Activated CD8-positive, alpha-beta memory T cell treated with anti-CD3 and anti-CD28 coated beads, Interleukin-2, amount 10 ng/mL, durations not matched to agents 7 days and 5 days (primary cell): ENCODE measurements at regions of chr2 and their contacts with region 1.

Region 1: DNA sequence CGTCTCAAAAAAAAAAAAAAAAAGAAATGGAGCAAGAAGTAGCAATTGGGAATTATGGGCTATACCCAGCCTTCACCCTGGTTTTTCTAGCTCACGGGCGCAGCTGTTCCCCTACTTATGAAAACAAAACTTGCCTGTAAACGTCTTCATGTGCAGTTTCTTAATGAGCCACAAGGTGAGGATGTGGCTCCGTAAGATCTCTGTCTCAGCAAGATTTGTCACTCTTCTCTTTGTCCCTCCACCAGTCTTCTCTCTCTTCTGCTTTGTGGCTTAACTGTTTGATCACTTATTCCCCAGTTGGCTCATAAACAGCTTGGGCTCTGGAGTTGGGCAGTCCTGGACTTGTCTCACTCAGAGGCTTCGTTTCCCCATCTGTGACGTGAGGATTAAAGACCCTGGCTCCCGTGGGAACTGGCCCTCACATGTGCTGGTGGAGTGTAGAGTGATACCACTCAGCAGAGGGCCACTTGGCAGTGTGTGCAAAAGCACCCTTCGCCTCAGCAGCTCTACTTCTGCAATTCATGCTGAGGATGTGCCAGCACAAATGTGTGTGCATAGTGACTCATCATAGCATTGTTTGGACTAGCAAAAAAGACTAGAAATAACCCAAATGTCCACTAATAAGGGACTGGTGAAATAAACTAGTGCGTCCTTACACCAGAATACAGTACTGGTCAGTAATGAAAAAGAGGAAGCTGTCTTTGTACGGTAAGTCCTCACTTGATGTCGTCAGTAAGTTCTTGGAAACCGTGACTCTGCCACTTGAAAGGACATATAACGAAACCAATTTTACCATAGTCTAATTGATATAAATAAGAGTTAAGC is 8.7 kb downstream of the CEP68 start:
- DNase-seq: peak; percentile 66
- ATAC-seq: peak; percentile 90
- H3K4me3 Mint-ChIP-seq: no peak overlapping the region
- H3K27ac Mint-ChIP-seq: peak overlapping the region; percentile 43
- H3K4me1 Mint-ChIP-seq: peaks cover 28% of the 10 kb centered on the region
- H3K27me3 Mint-ChIP-seq: no peaks in the 10 kb centered on the region

Region 2: GRCh38 chr2:64873472-64873924 is 191.4 kb before region 1 on chr2:
- CTCF ChIA-PET with region 1: no interaction called
- DNase-seq: peak; percentile 85
- ATAC-seq: peak; percentile 98
- H3K4me3 Mint-ChIP-seq: peak overlapping the region; percentile 33
- H3K27ac Mint-ChIP-seq: no peak overlapping the region
- H3K4me1 Mint-ChIP-seq: peaks cover 6% of the 10 kb centered on the region
- H3K27me3 Mint-ChIP-seq: peaks cover 11% of the 10 kb centered on the region

Region 3: DNA sequence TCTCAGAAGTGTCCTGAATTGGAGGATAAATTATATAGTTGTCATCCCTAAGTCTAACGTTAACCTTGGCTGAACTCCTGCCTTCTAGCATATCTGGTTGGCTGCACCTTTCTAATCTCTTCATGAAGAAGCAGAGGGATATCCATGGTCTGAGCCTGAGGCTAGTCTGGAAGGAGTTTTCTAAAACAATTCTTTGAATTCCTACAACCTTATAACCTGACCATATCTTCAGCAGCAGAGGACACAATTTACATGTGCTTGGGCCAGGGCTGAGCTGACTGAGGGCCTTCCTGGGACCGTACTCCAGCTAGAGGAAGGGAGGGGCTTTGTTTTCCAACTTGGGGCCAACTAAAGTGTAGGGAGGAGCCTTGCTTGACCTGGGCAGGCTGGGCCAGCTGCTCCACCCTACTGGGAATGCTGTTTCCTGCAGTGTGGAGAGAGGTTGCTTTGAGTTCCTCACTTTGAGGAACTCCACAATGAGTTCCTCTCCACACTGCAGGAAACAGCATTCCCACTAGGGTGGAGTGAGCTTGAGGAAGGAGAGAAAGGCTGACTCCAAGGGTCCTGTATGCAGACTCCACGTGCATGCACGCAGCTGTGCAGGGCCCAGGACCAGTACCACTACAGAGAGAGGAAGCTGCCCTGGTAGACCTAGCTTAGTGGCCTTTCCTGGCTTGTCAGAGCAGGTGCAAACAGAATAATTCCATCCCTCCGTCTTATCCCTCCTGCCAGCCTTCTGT is 10.8 kb after region 1 on chr2:
- CTCF ChIA-PET with region 1: interaction called, 18 read pairs
- DNase-seq: no peak
- ATAC-seq: no peak
- H3K4me3 Mint-ChIP-seq: no peak overlapping the region
- H3K27ac Mint-ChIP-seq: peak overlapping the region; percentile 38
- H3K4me1 Mint-ChIP-seq: peaks cover 4% of the 10 kb centered on the region
- H3K27me3 Mint-ChIP-seq: no peaks in the 10 kb centered on the region

Region 4: DNA sequence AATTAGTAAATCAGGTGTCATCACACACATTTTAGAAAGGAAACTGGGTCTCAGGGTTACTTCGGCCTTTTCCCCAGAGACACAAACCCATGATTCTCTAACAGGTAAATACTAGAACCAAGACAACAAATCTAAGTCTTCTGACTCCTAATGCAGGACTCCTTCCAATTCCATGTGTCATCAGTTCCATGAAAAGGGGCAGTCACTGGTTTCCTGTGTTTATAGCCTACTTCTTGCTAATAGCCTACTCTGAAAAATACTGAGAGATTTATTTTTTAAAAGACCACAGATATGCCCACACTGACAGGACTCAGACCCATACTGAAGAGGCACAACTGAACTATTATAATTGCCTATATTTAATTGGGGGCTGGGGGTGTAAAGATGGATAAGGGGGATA is 32.0 kb after region 1 on chr2:
- CTCF ChIA-PET with region 1: no interaction called
- DNase-seq: no peak
- ATAC-seq: no peak
- H3K4me3 Mint-ChIP-seq: no peak overlapping the region
- H3K27ac Mint-ChIP-seq: no peak overlapping the region
- H3K4me1 Mint-ChIP-seq: peaks cover 7% of the 10 kb centered on the region
- H3K27me3 Mint-ChIP-seq: no peaks in the 10 kb centered on the region

Region 5: GRCh38 chr2:65129826-65130663 is 65.1 kb after region 1 on chr2 and contains the start of gene RAB1A:
- CTCF ChIA-PET with region 1: interaction called, 22 read pairs
- DNase-seq: peak; percentile 100
- ATAC-seq: peak; percentile 95
- H3K4me3 Mint-ChIP-seq: peak within 1 kb of the TSS; percentile 95
- H3K27ac Mint-ChIP-seq: peak within 1 kb of the TSS; percentile 99
- H3K4me1 Mint-ChIP-seq: peaks cover 40% of the 10 kb centered on the region
- H3K27me3 Mint-ChIP-seq: no peaks in the 10 kb centered on the region
- total RNA-seq, gene RAB1A: 58.4 to 78.3 TPM

Region 6: DNA sequence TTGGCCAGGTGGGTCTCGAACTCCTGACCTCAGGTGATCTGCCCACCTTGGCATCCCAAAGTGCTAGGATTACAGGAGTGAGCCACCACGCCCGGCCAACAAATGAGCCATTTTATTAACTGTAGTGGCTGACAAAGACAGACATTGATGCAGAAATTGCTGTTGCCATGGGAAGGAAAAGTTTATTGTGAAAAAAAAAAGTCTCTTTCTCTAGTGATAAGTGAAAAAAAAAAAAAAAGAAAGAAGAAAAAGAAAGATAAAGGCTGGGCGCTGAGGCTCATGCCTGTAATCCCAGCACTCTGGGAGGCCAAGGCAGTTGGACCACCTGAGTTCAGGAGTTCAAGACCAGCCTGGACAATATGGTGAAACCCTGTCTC is 104.8 kb after region 1 on chr2:
- CTCF ChIA-PET with region 1: interaction called, 43 read pairs
- DNase-seq: no peak
- ATAC-seq: no peak
- H3K4me3 Mint-ChIP-seq: no peak overlapping the region
- H3K27ac Mint-ChIP-seq: no peak overlapping the region
- H3K4me1 Mint-ChIP-seq: no peaks in the 10 kb centered on the region
- H3K27me3 Mint-ChIP-seq: no peaks in the 10 kb centered on the region

Region 7: GRCh38 chr2:65186872-65187851 is 122.2 kb after region 1 on chr2:
- CTCF ChIA-PET with region 1: interaction called, 55 read pairs
- DNase-seq: peak; percentile 73
- ATAC-seq: peak; percentile 92
- H3K4me3 Mint-ChIP-seq: no peak overlapping the region
- H3K27ac Mint-ChIP-seq: no peak overlapping the region
- H3K4me1 Mint-ChIP-seq: peaks cover 10% of the 10 kb centered on the region
- H3K27me3 Mint-ChIP-seq: peaks cover 6% of the 10 kb centered on the region

Region 8: DNA sequence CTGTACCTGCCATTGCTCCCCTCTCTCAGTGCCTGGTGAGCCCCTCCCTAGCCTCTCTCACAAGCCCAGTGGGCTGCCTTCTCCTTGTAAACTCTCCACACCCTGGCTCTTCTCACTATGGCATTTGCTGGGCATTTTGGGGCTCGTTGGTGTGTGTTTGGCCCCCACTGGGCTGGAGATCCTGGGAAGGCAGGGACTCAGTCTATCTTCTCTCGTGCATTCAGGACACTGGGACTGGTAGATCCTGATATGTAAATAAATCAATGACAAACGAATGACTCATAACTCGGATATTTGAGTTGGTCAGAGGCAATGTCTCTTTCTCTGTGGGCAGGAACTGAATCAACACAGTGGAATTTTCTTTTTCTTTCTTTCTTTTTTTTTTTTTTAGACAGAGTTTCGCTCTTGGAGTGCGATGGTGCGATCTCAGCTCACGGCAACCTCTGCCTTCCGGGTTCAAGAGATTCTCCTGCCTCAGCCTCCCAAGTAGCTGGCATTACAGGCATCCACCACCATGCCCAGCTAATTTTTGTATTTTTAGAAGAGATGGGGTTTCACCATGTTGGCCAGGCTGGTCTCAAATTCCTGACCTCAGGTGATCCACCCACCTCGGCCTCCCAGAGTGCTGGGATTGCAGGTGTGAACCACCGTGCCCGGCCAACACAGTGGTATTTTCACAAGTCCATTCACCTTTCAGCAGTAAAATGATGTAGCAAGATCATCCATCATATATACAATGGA is 512.1 kb after region 1 on chr2:
- CTCF ChIA-PET with region 1: interaction called, 14 read pairs
- DNase-seq: no peak
- ATAC-seq: no peak
- H3K4me3 Mint-ChIP-seq: no peak overlapping the region
- H3K27ac Mint-ChIP-seq: no peak overlapping the region
- H3K4me1 Mint-ChIP-seq: peaks cover 3% of the 10 kb centered on the region
- H3K27me3 Mint-ChIP-seq: peaks cover 37% of the 10 kb centered on the region